ENCODE measurements at regions of chr3 and their contacts with region 1.

Region 1: GRCh38 chr3:183754052-183754451 is 56.5 kb downstream of the YEATS2 start:
- DNase-seq: no peak
- H3K4me3 ChIP-seq: no peak overlapping the region
- H3K27ac ChIP-seq: no peak overlapping the region
- H3K27me3 ChIP-seq: no peaks in the 10 kb centered on the region
- CTCF ChIP-seq: no peak

Region 2: DNA sequence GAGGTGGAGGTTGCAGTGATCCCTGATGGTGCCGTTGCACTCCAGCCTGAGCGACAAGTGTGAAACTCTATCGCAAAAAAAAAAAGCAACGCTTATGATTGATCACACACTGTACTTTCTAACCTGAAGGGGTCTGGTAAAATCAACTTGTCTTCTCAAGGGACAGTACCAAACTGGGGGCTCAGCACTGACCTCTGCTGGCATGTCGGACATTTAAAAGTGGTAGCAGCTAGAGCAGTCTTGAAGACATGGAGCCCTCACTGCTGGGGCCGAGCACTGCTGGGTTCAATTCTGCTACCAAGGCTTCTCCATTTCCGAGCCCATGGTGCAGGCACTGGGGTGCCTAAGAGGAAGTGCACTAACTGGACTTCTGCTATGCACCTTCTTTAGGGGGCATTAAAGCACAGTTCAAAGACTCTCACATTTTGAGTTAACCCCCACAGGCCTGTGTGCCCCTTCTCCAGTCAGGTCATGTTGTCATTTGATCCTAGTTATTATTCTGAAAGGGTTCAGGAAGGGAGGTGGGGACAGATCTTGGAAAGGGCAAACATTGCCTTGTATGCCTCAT is 565.1 kb before region 1 on chr3:
- CTCF ChIA-PET with region 1: no interaction called
- POLR2A ChIA-PET with region 1: no interaction called
- DNase-seq: no peak
- H3K4me3 ChIP-seq: no peak overlapping the region
- H3K27ac ChIP-seq: no peak overlapping the region
- H3K27me3 ChIP-seq: no peaks in the 10 kb centered on the region
- CTCF ChIP-seq: peak; percentile 42

Region 3: GRCh38 chr3:183635431-183636220 is 118.4 kb before region 1 on chr3 and contains the start of gene KLHL24:
- CTCF ChIA-PET with region 1: no interaction called
- POLR2A ChIA-PET with region 1: interaction called, 12 read pairs
- DNase-seq: peak; percentile 79
- H3K4me3 ChIP-seq: peak within 1 kb of the TSS; percentile 89
- H3K27ac ChIP-seq: peak within 1 kb of the TSS; percentile 96
- H3K27me3 ChIP-seq: no peaks in the 10 kb centered on the region
- CTCF ChIP-seq: no peak
- polyA plus RNA-seq, gene KLHL24: 26.4 and 33.6 TPM in 2 replicates

Region 4: DNA sequence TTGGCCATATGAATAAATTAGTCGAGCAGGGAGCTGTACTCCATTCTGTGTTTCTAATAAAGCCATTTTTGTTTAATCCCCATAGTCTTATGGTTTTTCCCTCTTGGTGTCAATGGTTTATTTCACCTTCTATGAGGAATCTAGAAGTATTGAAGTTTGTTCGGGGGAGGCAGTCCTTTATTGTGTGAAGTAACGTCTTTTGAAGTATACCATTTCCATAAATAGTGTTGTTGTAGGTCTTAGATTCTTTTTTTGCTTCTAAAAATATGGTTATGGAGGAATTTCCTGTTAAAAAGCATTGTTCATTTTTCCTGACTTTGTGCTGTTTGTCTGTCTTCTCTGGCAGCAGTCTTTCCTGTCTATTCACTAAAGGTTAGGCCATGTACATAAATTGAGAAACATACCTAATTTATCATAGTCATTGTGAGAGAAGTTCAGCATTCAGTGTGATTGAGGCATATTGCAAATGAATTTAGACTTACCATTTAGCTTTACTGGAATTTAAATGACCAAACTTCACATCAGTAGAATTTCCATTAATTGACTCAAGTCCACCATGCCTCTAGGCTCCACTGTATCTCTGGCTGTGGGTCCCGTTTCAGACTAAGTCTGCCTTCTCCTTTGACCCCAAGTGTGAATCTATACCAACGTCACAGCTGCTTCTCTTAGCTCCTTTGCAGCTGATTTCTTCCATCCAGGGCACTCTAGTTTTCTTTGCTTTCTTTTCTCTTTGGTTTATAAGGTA is 19.1 kb before region 1 on chr3:
- CTCF ChIA-PET with region 1: no interaction called
- POLR2A ChIA-PET with region 1: no interaction called
- DNase-seq: no peak
- H3K4me3 ChIP-seq: no peak overlapping the region
- H3K27ac ChIP-seq: no peak overlapping the region
- H3K27me3 ChIP-seq: no peaks in the 10 kb centered on the region
- CTCF ChIP-seq: no peak

Measured in AG04450 (cell line).